GM10248 (cell line): ENCODE measurements at regions of chr7 and their contacts with region 1.

Region 1: GRCh38 chr7:120475994-120476393 is 203.0 kb downstream of the KCND2 start:
- DNase-seq: no peak
- CTCF ChIP-seq: no peak

Region 2: DNA sequence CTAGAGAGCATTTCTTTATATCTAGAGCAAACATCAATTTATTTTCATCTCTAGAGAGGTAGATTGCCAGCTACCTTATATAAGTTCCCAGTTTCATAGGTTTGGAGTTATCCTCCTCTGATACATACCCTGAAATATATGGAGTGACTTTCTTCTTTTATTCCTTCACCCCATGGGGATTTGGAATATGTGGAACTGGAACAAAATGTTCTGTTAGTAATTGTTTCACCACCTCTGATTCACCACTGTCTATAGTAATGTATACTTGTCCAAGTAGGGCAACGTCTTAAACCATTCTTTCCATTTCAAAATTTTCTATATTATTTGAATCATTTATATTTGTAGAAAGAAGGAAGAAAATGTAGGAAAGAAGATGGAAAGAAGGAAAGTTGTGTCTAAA is 714.2 kb before region 1 on chr7:
- CTCF ChIA-PET with region 1: no interaction called
- POLR2A ChIA-PET with region 1: no interaction called
- DNase-seq: no peak
- CTCF ChIP-seq: no peak

Region 3: DNA sequence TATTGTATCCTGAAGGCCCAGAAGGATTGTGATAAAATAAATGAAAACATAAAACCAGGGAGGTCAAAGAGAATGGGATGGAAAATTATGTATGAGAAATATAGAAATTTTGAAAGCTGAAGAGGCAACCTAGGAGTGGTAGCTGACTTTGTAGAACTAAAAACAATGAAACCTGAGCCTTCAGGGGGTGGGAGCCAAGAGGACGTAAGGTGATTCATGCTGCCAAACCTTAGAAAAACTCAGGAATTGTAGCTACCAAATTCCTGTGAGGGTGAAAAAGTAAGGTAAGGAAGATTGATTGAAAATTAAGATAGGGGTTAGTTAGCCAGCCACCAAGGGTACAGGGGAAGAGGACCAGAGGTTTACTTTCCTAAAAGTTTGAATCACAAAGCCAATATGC is 10.2 kb after region 1 on chr7:
- CTCF ChIA-PET with region 1: interaction called, 13 read pairs
- POLR2A ChIA-PET with region 1: no interaction called
- DNase-seq: no peak
- CTCF ChIP-seq: no peak

Region 4: GRCh38 chr7:120523985-120524384 is 48.0 kb after region 1 on chr7:
- CTCF ChIA-PET with region 1: no interaction called
- POLR2A ChIA-PET with region 1: no interaction called
- DNase-seq: no peak
- CTCF ChIP-seq: no peak

Region 5: GRCh38 chr7:121323515-121324302 is 847.7 kb after region 1 on chr7:
- CTCF ChIA-PET with region 1: no interaction called
- POLR2A ChIA-PET with region 1: no interaction called
- DNase-seq: no peak
- CTCF ChIP-seq: no peak